ENCODE measurements at regions of chr11 and their contacts with region 1.

Region 1: DNA sequence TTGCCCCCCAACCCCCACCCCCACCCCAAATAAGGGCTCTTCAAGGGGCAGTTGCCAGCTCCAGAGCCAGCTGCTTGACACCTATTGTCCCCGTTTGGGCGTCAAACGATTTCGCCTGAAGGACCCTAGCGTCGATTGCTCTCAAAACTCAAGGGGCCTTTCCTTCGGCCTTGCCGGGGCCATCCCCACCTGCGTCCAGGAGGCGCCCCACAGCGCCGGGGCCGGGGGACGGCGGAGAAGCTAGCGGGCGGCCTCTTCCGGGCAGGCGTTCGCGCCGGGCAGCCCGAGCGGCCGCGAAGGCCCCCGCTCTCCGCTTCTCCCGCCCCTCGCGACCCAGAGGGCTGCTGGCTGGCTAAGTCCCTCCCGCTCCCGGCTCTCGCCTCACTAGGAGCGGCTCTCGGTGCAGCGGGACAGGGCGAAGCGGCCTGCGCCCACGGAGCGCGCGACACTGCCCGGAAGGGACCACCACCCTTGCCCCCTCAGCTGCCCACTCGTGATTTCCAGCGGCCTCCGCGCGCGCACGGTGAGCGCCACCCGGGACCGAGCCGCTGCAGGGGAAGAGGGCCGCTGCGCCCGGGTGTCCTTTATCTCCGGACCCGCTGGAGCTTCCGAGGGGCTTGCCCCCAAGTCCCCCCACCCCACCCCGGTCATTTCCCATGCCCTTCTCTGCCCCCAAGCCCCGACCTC is at the start of gene CAPRIN1:
- DNase-seq: peak; percentile 84
- ATAC-seq: peak; percentile 79
- H3K4me3 Mint-ChIP-seq: peak within 1 kb of the TSS; percentile 98
- H3K27ac Mint-ChIP-seq: peak within 1 kb of the TSS; percentile 98
- H3K4me1 Mint-ChIP-seq: peaks cover 38% of the 10 kb centered on the region
- H3K27me3 Mint-ChIP-seq: peaks cover 3% of the 10 kb centered on the region; the same call in 1 of the 2 replicates
- CTCF ChIP-seq: no peak
- total RNA-seq, gene CAPRIN1: 282 to 288 TPM (median 288 TPM) in 3 replicates

Region 2: GRCh38 chr11:34105079-34105956 is 53.8 kb after region 1 on chr11 and contains the start of gene NAT10:
- CTCF ChIA-PET with region 1: no interaction called
- POLR2A ChIA-PET with region 1: interaction called, 12 read pairs
- DNase-seq: peak; percentile 96
- ATAC-seq: peak; percentile 84
- H3K4me3 Mint-ChIP-seq: peak within 1 kb of the TSS; percentile 94
- H3K27ac Mint-ChIP-seq: peak within 1 kb of the TSS; percentile 99
- H3K4me1 Mint-ChIP-seq: peaks cover 18% of the 10 kb centered on the region
- H3K27me3 Mint-ChIP-seq: no peaks in the 10 kb centered on the region
- CTCF ChIP-seq: no peak
- total RNA-seq, gene NAT10: 70.8 to 75.5 TPM (median 74.7 TPM) in 3 replicates

Measured in WTC11 (cell line).